ENCODE measurements at regions of chr1 and their contacts with region 1.

Region 1: DNA sequence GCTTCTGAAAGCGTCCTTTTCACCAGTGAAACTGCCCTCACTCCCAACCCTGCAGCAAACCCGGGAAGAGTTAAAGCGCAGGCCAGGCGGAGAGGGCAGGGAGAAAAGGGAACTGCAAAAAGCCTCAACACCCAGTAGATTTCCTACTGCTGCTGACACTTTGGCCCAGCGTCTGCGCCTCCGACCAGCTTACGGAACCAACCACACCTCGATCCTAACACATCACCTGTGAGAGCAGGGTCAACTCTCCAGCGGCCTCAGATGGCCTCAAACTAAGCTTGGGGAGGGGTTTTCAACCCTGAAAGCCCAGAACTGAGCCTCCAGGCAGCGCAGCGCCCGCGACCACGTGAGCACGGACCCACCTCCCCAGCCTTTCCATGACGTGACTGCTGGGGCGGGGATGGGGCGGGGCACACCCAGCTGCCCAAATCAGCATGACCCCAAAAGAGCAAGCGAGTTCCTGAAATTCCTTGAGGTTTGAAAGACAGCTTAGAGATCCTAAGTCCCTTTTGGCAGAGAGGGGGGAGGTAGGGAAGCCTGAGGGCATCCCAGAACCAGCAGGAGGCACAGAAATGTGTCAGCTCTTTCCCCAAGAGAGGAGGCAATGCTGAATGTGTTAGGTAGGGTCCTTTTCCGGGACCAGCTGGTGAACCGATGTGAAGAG is 59.1 kb downstream of the ITPKB start:
- DNase-seq: peak; percentile 92
- H3K4me3 Mint-ChIP-seq: peak overlapping the region; percentile 82
- H3K27ac Mint-ChIP-seq: peak overlapping the region; percentile 96
- H3K4me1 Mint-ChIP-seq: peaks cover 86% of the 10 kb centered on the region
- H3K27me3 Mint-ChIP-seq: no peaks in the 10 kb centered on the region

Region 2: GRCh38 chr1:226634166-226634588 is 45.8 kb before region 1 on chr1:
- intact Hi-C with region 1: loop called (anchors 2 kb)
- DNase-seq: peak; percentile 93
- H3K4me3 Mint-ChIP-seq: peak overlapping the region; percentile 33
- H3K27ac Mint-ChIP-seq: peak overlapping the region; percentile 5
- H3K4me1 Mint-ChIP-seq: peaks cover 40% of the 10 kb centered on the region
- H3K27me3 Mint-ChIP-seq: no peaks in the 10 kb centered on the region

Region 3: GRCh38 chr1:226662642-226663326 is 17.2 kb before region 1 on chr1:
- intact Hi-C with region 1: loop called (anchors 1 kb)
- DNase-seq: peak; percentile 92
- H3K4me3 Mint-ChIP-seq: peak overlapping the region; percentile 69
- H3K27ac Mint-ChIP-seq: peak overlapping the region; percentile 81
- H3K4me1 Mint-ChIP-seq: peaks cover 79% of the 10 kb centered on the region
- H3K27me3 Mint-ChIP-seq: no peaks in the 10 kb centered on the region

Region 4: GRCh38 chr1:226708342-226708780 is 28.4 kb after region 1 on chr1:
- intact Hi-C with region 1: loop called (anchors 1 kb)
- DNase-seq: no peak
- H3K4me3 Mint-ChIP-seq: peak overlapping the region; percentile 71
- H3K27ac Mint-ChIP-seq: peak overlapping the region; percentile 93
- H3K4me1 Mint-ChIP-seq: peaks cover 69% of the 10 kb centered on the region
- H3K27me3 Mint-ChIP-seq: no peaks in the 10 kb centered on the region

Region 5: DNA sequence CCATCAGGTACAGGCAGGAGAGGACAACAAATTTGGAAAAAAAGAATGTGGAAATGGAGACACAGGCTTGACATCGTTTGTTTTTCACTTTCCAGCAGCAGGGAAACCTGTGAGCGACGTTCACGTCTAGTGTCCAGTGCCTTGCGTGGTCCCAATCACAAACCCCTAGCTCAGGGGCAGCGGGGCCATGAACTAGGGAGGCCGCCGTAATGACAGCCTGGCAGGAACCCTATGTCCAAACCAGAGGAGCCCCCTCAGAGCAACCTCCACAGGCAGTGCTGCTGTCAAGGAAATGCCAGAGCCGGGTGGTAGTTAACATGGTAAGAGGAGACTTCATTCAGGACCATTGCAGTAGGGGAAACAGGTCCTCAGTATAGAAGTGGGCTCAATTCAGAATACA is 152.6 kb after region 1 on chr1:
- intact Hi-C with region 1: no loop called
- DNase-seq: no peak
- H3K4me3 Mint-ChIP-seq: no peak overlapping the region
- H3K27ac Mint-ChIP-seq: no peak overlapping the region
- H3K4me1 Mint-ChIP-seq: peaks cover 9% of the 10 kb centered on the region
- H3K27me3 Mint-ChIP-seq: peaks cover 4% of the 10 kb centered on the region

Region 6: DNA sequence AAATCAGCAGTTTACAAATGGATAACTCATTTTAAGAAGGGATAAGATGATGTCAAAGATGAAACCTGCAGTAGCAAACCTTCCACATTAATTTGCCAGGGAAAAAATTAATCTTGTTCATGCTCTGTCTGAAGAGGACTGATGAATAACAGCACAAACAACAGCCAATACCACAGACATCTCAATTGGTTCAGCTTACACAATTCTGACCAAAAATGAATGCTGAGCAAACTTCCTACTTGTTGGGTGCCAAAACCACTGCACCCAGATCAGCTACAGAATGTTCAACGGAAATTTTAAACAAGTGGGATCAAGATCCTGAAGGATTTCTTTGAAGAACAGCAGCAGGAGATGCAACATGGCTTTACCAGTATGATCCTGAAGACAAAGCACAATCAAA is 358.4 kb after region 1 on chr1:
- intact Hi-C with region 1: no loop called
- DNase-seq: no peak
- H3K4me3 Mint-ChIP-seq: no peak overlapping the region
- H3K27ac Mint-ChIP-seq: no peak overlapping the region
- H3K4me1 Mint-ChIP-seq: no peaks in the 10 kb centered on the region
- H3K27me3 Mint-ChIP-seq: peaks cover 12% of the 10 kb centered on the region